Activated CD4-positive, alpha-beta T cell treated with anti-CD3 and anti-CD28 coated beads, Interleukin-2, amount 10 ng/mL, durations not matched to agents 24 days and 14 days (primary cell): ENCODE measurements at regions of chr5 and their contacts with region 1.

Region 1: DNA sequence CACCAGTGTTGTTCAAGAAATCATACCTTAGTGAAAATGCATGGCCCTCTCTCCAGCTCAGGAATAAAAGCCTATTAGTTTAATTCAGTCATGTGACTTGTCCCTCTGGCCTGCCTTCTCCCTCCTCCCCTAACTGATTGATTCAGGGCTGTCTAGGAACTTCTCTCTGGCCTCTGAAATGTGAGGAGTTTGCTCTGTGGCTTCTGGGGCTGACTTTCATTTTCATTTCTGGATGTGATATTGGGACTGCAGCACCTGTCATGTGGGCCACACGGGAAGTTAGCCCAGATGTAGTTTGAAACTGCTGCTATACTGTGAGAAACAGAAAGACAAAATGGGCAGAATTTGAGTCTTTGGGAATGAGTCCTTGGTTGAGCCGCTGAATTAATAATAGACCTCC is 44.8 kb downstream of the PARP8 start:
- DNase-seq: peak; percentile 90
- H3K4me3 Mint-ChIP-seq: peak overlapping the region; percentile 71
- H3K27ac Mint-ChIP-seq: peak overlapping the region; percentile 63
- H3K4me1 Mint-ChIP-seq: peaks cover 44% of the 10 kb centered on the region
- H3K27me3 Mint-ChIP-seq: no peaks in the 10 kb centered on the region

Region 2: DNA sequence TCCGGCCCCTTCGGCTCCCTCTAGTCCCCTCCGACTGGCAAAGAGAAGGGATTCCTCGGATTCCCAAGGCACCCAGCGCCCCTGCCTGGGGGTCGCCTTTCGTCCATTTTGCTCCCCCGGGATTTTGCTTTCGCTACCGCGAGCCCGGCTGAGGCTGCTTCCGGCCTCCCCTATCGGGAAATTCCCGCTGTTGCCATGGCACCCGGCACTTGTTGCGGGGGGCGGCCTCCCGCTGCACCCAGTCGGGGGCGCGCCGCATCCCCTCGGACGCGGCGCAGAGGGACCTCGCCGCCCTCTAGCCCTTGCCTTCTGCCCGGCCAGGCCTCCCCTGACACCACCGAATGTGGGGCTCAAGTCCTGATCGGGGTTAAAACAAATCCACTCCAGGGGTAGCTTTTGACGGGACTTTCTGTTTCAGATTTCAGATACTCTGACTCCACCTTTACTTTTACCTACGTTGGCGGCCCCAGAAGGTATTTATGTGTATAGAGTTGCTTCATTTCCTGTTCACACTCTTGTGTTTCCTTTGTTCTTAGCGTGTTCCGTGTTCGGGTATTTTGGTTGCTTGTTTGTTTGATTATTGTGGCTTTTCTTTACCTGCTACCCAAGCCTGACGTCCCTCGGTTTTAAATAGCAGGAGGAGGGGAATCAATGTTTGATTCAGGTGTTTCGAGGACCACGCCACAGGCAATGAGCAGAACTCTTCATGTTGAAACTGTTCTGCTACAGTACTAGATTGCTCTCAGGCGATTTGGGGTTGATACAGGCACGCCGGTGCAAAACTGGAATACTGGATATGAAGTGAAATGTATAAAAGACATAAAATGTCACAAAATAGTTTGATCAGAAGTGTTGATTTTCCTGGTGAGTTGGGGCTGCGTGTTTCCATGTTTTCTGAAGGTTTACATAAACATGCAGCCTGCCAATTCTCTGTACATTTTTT is 43.3 kb before region 1 on chr5:
- intact Hi-C with region 1: loop called (anchors 1 kb)
- DNase-seq: peak; percentile 95
- H3K4me3 Mint-ChIP-seq: peak overlapping the region; percentile 99
- H3K27ac Mint-ChIP-seq: peak overlapping the region; percentile 100
- H3K4me1 Mint-ChIP-seq: peaks cover 48% of the 10 kb centered on the region
- H3K27me3 Mint-ChIP-seq: no peaks in the 10 kb centered on the region

Region 3: GRCh38 chr5:50694027-50694590 is 17.2 kb before region 1 on chr5:
- intact Hi-C with region 1: loop called (anchors 1 kb)
- DNase-seq: no peak
- H3K4me3 Mint-ChIP-seq: no peak overlapping the region
- H3K27ac Mint-ChIP-seq: no peak overlapping the region
- H3K4me1 Mint-ChIP-seq: peaks cover 26% of the 10 kb centered on the region
- H3K27me3 Mint-ChIP-seq: no peaks in the 10 kb centered on the region

Region 4: GRCh38 chr5:50699737-50700136 is 11.5 kb before region 1 on chr5:
- intact Hi-C with region 1: loop called (anchors 1 kb)
- DNase-seq: no peak
- H3K4me3 Mint-ChIP-seq: no peak overlapping the region
- H3K27ac Mint-ChIP-seq: peak overlapping the region; percentile 48
- H3K4me1 Mint-ChIP-seq: peaks cover 35% of the 10 kb centered on the region
- H3K27me3 Mint-ChIP-seq: no peaks in the 10 kb centered on the region

Region 5: DNA sequence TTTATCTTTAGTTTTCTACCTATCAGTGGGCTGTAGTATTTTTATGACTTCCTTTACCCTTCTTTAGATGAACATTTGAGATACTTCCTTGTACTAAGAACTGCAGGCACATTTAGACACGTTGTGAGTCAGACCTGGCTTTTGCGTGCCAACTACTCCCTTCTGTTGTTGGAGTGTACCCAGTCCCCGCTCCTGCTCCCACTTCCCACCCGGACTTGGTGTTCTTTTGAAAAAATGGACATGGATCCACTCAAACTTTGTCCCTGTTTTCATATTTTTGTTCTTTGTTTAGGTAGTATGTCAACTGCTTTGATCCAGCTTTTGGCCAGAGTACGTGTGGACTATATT is 15.8 kb after region 1 on chr5:
- intact Hi-C with region 1: loop called (anchors 2 kb)
- DNase-seq: no peak
- H3K4me3 Mint-ChIP-seq: no peak overlapping the region
- H3K27ac Mint-ChIP-seq: peak overlapping the region; percentile 74
- H3K4me1 Mint-ChIP-seq: peaks cover 19% of the 10 kb centered on the region
- H3K27me3 Mint-ChIP-seq: no peaks in the 10 kb centered on the region

Region 6: GRCh38 chr5:50744776-50745175 is 33.5 kb after region 1 on chr5:
- intact Hi-C with region 1: loop called (anchors 1 kb)
- DNase-seq: no peak
- H3K4me3 Mint-ChIP-seq: peak overlapping the region; percentile 90
- H3K27ac Mint-ChIP-seq: peak overlapping the region; percentile 91
- H3K4me1 Mint-ChIP-seq: peaks cover 51% of the 10 kb centered on the region
- H3K27me3 Mint-ChIP-seq: no peaks in the 10 kb centered on the region